GM12878 (cell line): ENCODE measurements at regions of chr10 and their contacts with region 1.

Region 1: GRCh38 chr10:104268716-104269645 is at the start of gene GSTO2:
- DNase-seq: peak; percentile 90
- ATAC-seq: peak; percentile 98
- H3K4me3 ChIP-seq: peak within 1 kb of the TSS; percentile 73
- H3K27ac ChIP-seq: peak within 1 kb of the TSS; percentile 80
- H3K4me1 ChIP-seq: 0 out of 2 replicates have a peak, but pooled peaks cover 3% of the 10 kb centered on the region
- H3K27me3 ChIP-seq: no peaks in the 10 kb centered on the region
- CTCF ChIP-seq: no peak
- EP300 ChIP-seq: no peak
- POLR2A ChIP-seq: peak; percentile 92
- RAD21 ChIP-seq: no peak
- polyA plus RNA-seq, gene GSTO2: 0.16 to 0.53 TPM

Region 2: DNA sequence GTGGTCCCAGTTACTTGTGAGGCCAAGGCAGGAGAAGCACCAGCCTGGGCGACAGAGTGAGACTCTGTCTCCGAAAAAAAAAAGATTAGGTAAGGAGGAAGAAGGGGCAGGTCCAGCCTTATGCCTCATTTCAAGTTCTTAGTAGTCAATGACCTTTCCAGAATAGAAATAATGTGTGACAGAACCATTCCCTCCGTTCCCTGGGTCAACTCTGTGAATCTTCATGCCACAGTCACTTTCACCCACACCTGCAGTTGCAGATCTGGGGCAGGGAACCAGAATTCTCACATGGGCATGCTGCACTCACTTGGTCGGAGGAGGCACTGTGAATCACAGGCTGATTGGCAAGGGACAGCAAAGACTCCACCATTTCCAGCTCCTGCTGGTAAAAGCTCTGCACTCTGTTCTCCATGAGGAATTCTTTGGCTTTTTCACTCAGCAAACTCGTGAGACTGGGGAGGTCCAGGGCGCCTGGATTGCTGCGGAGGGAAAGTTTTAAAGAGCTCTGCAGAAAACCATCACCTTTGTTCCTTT is 371.7 kb before region 1 on chr10:
- CTCF ChIA-PET with region 1: no interaction called
- POLR2A ChIA-PET with region 1: no interaction called
- RAD21 ChIA-PET with region 1: no interaction called
- SMC1A ChIA-PET with region 1: no interaction called
- in situ Hi-C with region 1: no loop called
- intact Hi-C with region 1: loop called (anchors 10 kb)
- DNase-seq: no peak
- ATAC-seq: no peak
- H3K4me3 ChIP-seq: no peak overlapping the region
- H3K27ac ChIP-seq: no peak overlapping the region
- H3K4me1 ChIP-seq: no peaks in the 10 kb centered on the region
- H3K27me3 ChIP-seq: no peaks in the 10 kb centered on the region
- CTCF ChIP-seq: no peak
- EP300 ChIP-seq: no peak
- POLR2A ChIP-seq: no peak
- RAD21 ChIP-seq: no peak

Region 3: GRCh38 chr10:104202231-104202630 is 66.8 kb before region 1 on chr10:
- CTCF ChIA-PET with region 1: no interaction called
- POLR2A ChIA-PET with region 1: no interaction called
- RAD21 ChIA-PET with region 1: no interaction called
- SMC1A ChIA-PET with region 1: no interaction called
- in situ Hi-C with region 1: no loop called
- intact Hi-C with region 1: no loop called
- DNase-seq: no peak
- ATAC-seq: no peak
- H3K4me3 ChIP-seq: no peak overlapping the region
- H3K27ac ChIP-seq: no peak overlapping the region
- H3K4me1 ChIP-seq: no peaks in the 10 kb centered on the region
- H3K27me3 ChIP-seq: no peaks in the 10 kb centered on the region; a peak in 2 of 4 replicates
- CTCF ChIP-seq: no peak
- EP300 ChIP-seq: no peak
- POLR2A ChIP-seq: no peak
- RAD21 ChIP-seq: no peak

Region 4: GRCh38 chr10:104254493-104255310 is 14.3 kb before region 1 on chr10 and contains the start of gene GSTO1:
- CTCF ChIA-PET with region 1: interaction called, 105 read pairs
- POLR2A ChIA-PET with region 1: interaction called, 36 read pairs
- RAD21 ChIA-PET with region 1: interaction called, 24 read pairs
- SMC1A ChIA-PET with region 1: interaction called, 30 read pairs
- in situ Hi-C with region 1: no loop called
- intact Hi-C with region 1: no loop called
- DNase-seq: peak; percentile 30
- ATAC-seq: peak; percentile 89
- H3K4me3 ChIP-seq: peak within 1 kb of the TSS; percentile 81
- H3K27ac ChIP-seq: peak within 1 kb of the TSS; percentile 89
- H3K4me1 ChIP-seq: peaks cover 8% of the 10 kb centered on the region
- H3K27me3 ChIP-seq: no peaks in the 10 kb centered on the region
- CTCF ChIP-seq: peak in 1 of 3 experiments; percentile 18; a peak in 1 of 6 replicates
- EP300 ChIP-seq: no peak
- POLR2A ChIP-seq: peak; percentile 94
- RAD21 ChIP-seq: no peak
- polyA plus RNA-seq, gene GSTO1: 53.1 to 149 TPM